Heart right ventricle (tissue), 16 donors: ENCODE measurements at regions of chr6 and their contacts with region 1.

Region 1: GRCh38 chr6:40336940-40337760 is 250.0 kb downstream of the LRFN2 start:
- DNase-seq: no peak
- ATAC-seq: no peak
- H3K4me3 ChIP-seq: no peak overlapping the region
- H3K27ac ChIP-seq: no peak overlapping the region
- H3K4me1 ChIP-seq: no peaks in the 10 kb centered on the region
- H3K27me3 ChIP-seq: peaks cover 0 to 85% (median 50%) of the 10 kb centered on the region in 7 donors
- CTCF ChIP-seq: no peak

Region 2: DNA sequence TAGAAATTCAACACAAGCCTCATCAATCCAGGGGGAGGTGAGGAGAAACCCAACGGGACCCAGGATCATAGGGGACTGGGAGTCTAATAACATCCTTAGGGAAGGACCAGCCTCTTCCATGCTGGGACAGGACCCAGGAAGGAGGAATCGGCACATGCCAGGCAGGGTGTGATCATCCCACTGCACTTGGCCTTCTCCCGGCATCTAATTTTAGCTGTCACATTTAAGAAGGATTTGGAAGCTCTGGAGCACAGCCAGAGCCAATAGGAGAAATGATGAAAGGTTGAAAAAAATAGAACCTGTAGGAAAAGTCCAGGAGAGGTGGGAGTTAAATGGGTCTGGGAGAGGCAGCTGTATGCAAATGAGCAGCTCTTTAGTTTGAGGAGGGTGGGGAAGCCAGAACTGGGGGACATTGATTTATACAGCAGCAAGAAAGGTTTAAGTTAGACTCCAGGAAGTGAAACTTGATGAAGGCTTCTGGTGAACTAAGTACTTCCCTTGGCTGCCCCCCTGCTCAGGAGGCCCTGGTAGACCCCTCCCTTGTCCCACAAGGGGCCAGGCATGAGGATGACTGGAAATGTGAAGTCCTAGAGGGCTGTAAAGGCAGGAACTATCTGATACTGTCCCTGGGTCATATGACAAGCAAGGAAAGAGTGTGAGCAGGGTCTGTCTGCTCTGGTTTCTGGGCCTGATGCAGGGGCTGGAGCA is 10.3 kb before region 1 on chr6:
- intact Hi-C with region 1: no loop called
- DNase-seq: no peak
- ATAC-seq: peak in 6 of 8 donors; percentile 26 to 80 (median 50)
- H3K4me3 ChIP-seq: no peak overlapping the region
- H3K27ac ChIP-seq: no peak overlapping the region
- H3K4me1 ChIP-seq: peaks cover 0 to 20% (median 6%) of the 10 kb centered on the region in 9 donors
- H3K27me3 ChIP-seq: peaks cover 0 to 55% (median 33%) of the 10 kb centered on the region in 7 donors
- CTCF ChIP-seq: no peak

Region 3: GRCh38 chr6:40587240-40588069 is 250.3 kb after region 1 on chr6 and contains the start of gene LRFN2:
- intact Hi-C with region 1: loop called in 1 of 10 experiments (anchors 10 kb)
- DNase-seq: peak; percentile 34 to 71
- ATAC-seq: peak; percentile 87 to 95 (median 90)
- H3K4me3 ChIP-seq: peak within 1 kb of the TSS in 9 of 10 donors; percentile 22 to 53 (median 43)
- H3K27ac ChIP-seq: peak within 1 kb of the TSS in 1 of 10 donors; percentile 15
- H3K4me1 ChIP-seq: peaks cover 0 to 20% (median 15%) of the 10 kb centered on the region in 9 donors
- H3K27me3 ChIP-seq: peaks cover 0 to 94% (median 83%) of the 10 kb centered on the region in 7 donors
- CTCF ChIP-seq: peak; percentile 19 to 71 (median 62)
- total RNA-seq, gene LRFN2: not detected